Head of caudate nucleus (tissue), 42 donors: ENCODE measurements at regions of chr10 and their contacts with region 1.

Region 1: GRCh38 chr10:28676968-28677887 is at the start of gene BAMBI:
- DNase-seq: peak; percentile 82 to 98 (median 94)

Region 2: GRCh38 chr10:28587970-28588290 is 89.3 kb before region 1 on chr10:
- intact Hi-C with region 1: no loop called
- DNase-seq: peak in 2 of 42 donors; percentile 12 to 18

Region 3: DNA sequence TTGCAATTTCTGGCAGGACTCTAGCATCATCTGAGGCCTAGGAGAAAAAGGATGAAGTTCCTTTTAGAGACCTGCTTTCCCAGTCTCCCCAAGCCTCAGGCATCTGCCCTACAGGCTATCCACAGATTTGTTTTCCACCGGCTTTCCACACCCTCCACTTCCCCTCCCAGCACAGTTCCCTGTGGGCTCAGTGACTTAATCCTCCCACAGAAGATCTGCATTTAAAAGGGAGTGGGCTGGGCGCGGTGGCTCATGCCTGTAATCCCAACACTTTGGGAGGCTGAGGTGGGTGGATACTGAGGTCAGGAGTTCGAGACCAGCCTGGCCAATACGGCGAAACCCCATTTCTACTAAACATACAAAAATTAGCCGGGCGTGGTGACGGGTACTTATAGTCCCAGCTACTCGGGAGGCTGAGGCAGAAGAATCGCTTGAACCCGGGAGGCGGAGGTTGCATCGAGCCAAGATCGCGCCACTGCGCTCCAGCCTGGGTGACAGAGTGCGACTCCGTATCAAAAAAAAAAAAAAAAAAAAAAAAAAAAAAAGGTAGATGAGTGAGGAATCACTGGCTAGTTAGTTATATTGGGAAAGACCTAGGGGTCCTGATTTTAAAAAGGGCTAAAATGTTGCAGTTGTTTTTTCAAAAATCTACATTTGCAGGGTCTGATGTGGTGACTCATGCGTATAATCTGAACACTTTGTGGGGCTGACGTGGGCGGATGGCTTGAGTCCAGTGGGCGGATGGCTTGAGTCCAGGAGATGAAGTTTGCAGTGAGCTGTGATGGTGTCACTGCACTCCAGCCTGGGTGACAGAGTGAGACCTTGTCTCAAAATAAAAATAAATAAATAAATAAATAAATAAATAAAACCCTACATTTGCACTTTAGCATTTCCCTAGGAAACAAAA is 119.6 kb after region 1 on chr10:
- intact Hi-C with region 1: loop called (anchors 10 kb)
- DNase-seq: peak in 9 of 42 donors; percentile 13 to 62 (median 28)

Region 4: DNA sequence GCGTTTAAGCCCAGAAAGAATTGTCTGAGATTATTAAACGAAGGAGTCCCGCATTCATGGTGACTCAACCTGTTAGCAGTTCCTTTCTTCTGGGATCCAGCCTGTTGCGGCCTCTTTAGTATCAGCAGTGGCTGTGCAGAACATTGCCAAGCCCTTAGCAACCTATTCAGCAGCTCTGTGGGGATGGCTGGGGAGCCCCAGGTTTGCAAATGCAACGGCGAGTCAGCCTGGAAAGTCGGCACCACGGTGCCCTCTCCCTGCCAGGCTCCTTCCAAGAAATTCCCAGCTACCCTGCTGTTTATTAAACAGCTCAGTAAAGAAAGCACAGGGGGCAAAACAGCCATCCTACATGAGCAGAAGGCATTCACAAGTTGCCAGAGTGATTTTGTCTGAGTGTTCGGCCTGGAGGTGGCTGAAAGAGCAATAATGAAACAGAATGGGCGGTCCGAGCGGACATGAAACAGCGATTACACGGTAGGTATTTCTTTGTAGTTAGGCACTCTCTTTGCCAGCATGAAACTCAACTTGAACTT is 198.4 kb after region 1 on chr10:
- intact Hi-C with region 1: loop called (anchors 5 kb)
- DNase-seq: peak in 35 of 42 donors; percentile 8 to 77 (median 29)

Region 5: GRCh38 chr10:29131952-29132820 is 455.0 kb after region 1 on chr10:
- intact Hi-C with region 1: loop called (anchors 10 kb)
- DNase-seq: no peak

Region 6: DNA sequence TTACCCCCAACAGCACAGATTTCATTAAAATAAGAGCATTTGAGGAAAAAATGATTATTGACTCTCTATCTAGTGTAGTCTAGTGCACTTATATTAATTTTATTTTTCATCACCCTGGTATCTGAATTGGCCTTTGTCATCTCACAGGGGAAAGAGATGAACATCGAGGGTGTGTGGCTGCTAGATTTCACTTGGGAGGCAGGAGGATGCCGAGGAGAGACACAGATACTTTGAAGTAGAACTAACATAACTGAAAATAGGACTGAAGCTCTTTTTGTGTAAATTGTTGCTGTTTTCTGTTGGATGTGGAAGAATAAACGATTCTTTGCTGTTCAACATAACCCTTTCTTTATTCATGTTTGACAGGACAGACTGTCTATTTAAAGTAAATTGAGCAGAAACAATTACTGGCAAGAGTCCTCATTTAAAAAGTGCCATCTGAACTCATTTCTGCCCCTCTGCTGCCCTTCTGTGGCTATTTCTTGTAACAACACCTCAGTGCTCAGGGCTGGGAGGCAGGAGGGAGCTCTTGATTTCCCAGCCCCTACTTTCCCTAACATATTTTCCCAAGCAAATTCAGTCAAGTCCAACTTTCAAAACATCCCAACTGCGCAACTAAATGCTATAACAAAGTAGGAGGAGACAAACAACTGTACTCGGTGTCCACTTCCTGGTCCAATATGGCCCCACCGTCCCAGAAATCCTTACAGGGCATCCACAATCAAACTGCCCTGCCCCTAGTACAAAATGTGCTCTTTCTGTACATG is 627.2 kb after region 1 on chr10:
- intact Hi-C with region 1: loop called (anchors 5 kb)
- DNase-seq: peak; percentile 21 to 90 (median 72)